ENCODE measurements at regions of chr14 and their contacts with region 1.

Region 1: GRCh38 chr14:64704143-64704742 is at the start of gene PLEKHG3:
- DNase-seq: peak; percentile 82
- ATAC-seq: peak; percentile 62
- H3K4me3 ChIP-seq: peak within 1 kb of the TSS; percentile 93
- H3K27ac ChIP-seq: peak within 1 kb of the TSS; percentile 48
- H3K4me1 ChIP-seq: peaks cover 61% of the 10 kb centered on the region
- H3K27me3 ChIP-seq: no peaks in the 10 kb centered on the region
- CTCF ChIP-seq: no peak
- total RNA-seq, gene PLEKHG3: 49.6 and 64.0 TPM in 2 replicates

Region 2: GRCh38 chr14:63178912-63179311 is 1525.3 kb before region 1 on chr14:
- CTCF ChIA-PET with region 1: no interaction called
- POLR2A ChIA-PET with region 1: no interaction called
- intact Hi-C with region 1: no loop called
- DNase-seq: peak; percentile 78
- ATAC-seq: peak; percentile 79
- H3K4me3 ChIP-seq: no peak overlapping the region
- H3K27ac ChIP-seq: peak overlapping the region; percentile 75
- H3K4me1 ChIP-seq: peaks cover 12% of the 10 kb centered on the region
- H3K27me3 ChIP-seq: 0 out of 2 replicates have a peak, but pooled peaks cover 15% of the 10 kb centered on the region
- CTCF ChIP-seq: no peak

Region 3: GRCh38 chr14:63470962-63471793 is 1233.1 kb before region 1 on chr14:
- CTCF ChIA-PET with region 1: no interaction called
- POLR2A ChIA-PET with region 1: no interaction called
- intact Hi-C with region 1: no loop called
- DNase-seq: peak; percentile 96
- ATAC-seq: peak; percentile 87
- H3K4me3 ChIP-seq: peak overlapping the region; percentile 25; the same call in 1 of the 2 replicates
- H3K27ac ChIP-seq: peak overlapping the region; percentile 89
- H3K4me1 ChIP-seq: peaks cover 55% of the 10 kb centered on the region
- H3K27me3 ChIP-seq: no peaks in the 10 kb centered on the region
- CTCF ChIP-seq: no peak

Region 4: DNA sequence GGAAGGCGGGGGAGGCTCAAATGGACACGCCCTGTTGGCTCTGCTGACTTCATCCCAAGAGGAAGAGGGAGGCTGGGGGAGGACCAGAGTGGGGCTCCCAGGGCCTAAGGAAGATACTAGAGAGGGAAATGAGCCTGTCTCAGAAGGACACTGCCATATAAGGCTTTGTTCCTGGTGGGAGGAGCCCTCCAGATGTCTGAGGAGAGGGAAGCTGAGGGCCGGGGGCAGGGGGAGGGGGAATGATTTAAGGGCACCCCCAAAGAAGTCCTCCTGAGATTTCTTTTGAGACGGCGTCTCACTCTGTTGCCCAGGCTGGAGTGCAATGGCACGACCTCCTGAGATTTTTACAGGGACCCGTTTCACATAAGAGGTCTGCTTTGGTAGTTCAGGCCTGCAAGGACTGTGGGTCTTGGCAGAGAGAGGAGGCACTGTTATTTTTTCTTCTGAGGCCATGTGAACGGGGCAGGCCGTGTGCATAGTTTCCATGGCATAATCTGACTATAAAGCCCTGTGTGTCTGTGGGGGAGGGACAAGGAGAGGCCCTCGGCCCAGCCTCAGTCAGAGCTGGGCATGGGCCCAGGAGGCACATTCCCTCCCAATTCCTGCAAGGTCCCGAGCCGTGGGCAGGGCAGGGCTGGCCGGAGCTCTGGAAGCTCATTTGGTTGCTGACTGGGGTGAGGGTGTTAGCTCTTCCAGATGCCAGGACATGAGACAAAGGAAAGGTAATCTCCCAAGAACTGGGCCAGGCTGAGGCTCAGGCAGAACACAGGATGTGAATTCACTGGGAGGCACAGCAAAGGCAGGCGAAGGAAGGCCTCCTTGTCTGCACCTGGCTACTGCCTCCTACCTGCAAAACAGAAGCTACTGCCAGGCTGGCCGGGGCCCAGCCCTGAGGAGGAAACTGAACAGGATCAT is 22.2 kb before region 1 on chr14:
- CTCF ChIA-PET with region 1: interaction called, 4 read pairs
- POLR2A ChIA-PET with region 1: interaction called, 3 read pairs
- intact Hi-C with region 1: loop called (anchors 2 kb)
- DNase-seq: peak; percentile 72
- ATAC-seq: peak; percentile 83
- H3K4me3 ChIP-seq: no peak overlapping the region
- H3K27ac ChIP-seq: peak overlapping the region; percentile 67
- H3K4me1 ChIP-seq: peaks cover 38% of the 10 kb centered on the region
- H3K27me3 ChIP-seq: no peaks in the 10 kb centered on the region
- CTCF ChIP-seq: peak; percentile 38; the same call in 1 of the 2 replicates

Region 5: GRCh38 chr14:64720131-64720576 is 15.9 kb after region 1 on chr14:
- CTCF ChIA-PET with region 1: interaction called, 6 read pairs
- POLR2A ChIA-PET with region 1: interaction called, 4 read pairs
- intact Hi-C with region 1: loop called (anchors 1 kb)
- DNase-seq: peak; percentile 98
- ATAC-seq: peak; percentile 94
- H3K4me3 ChIP-seq: peak overlapping the region; percentile 16; the same call in 1 of the 2 replicates
- H3K27ac ChIP-seq: peak overlapping the region; percentile 93
- H3K4me1 ChIP-seq: peaks cover 76% of the 10 kb centered on the region
- H3K27me3 ChIP-seq: no peaks in the 10 kb centered on the region
- CTCF ChIP-seq: no peak

Region 6: DNA sequence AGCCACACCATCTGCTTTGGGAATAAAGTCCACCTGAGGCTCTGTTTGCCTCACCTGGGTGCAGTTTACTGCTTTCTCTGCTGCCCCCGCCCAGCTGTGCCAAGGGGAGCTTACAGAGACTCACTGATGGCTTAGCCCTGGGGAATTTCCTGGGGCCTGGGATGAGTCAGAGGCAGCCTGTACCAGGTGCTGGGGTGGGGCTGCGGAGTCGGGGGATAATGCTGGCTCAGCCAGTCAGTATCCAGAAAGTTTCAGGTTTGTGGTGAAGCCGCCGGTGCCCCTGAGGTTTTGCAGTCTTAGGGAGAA is 22.3 kb after region 1 on chr14:
- CTCF ChIA-PET with region 1: interaction called, 6 read pairs
- POLR2A ChIA-PET with region 1: no interaction called
- intact Hi-C with region 1: loop called (anchors 1 kb)
- DNase-seq: peak; percentile 96
- ATAC-seq: peak; percentile 98
- H3K4me3 ChIP-seq: peak overlapping the region; percentile 29; the same call in 1 of the 2 replicates
- H3K27ac ChIP-seq: peak overlapping the region; percentile 84
- H3K4me1 ChIP-seq: peaks cover 46% of the 10 kb centered on the region
- H3K27me3 ChIP-seq: no peaks in the 10 kb centered on the region
- CTCF ChIP-seq: no peak

Region 7: DNA sequence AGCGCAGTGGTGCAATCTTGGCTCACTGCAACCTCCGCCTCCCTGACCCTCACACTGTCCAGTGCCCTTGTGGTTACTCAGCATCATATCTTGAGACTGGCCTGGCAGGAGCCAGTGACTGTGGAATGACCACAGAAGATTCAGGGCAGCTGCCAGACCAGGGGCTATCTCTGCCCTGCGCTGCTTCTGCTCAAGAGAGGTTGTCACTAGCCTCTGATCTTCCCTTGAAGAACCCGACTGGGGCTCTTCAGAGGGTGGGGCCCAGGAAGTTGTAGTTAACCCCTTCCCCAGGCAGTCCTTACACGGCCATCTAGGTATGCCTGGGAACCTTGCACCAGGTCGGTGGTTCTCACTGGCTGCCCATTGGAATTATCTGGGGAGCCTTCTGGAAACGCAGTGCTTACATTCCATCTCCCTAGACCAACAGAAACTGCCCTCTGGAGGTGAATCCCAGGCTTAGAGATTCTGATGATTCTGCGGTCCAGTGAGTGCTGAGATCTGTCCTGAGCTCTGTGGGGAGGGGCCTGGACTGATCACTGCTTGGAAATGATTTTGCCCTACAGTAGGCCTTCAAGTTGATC is 41.4 kb after region 1 on chr14:
- CTCF ChIA-PET with region 1: interaction called, 3 read pairs
- POLR2A ChIA-PET with region 1: interaction called, 12 read pairs
- intact Hi-C with region 1: no loop called
- DNase-seq: no peak
- ATAC-seq: peak; percentile 39
- H3K4me3 ChIP-seq: no peak overlapping the region
- H3K27ac ChIP-seq: no peak overlapping the region
- H3K4me1 ChIP-seq: no peaks in the 10 kb centered on the region
- H3K27me3 ChIP-seq: no peaks in the 10 kb centered on the region
- CTCF ChIP-seq: 0 out of 2 replicates have a peak, but pooled peaks have one; percentile 33

Region 8: GRCh38 chr14:64764641-64765520 is 60.6 kb after region 1 on chr14:
- CTCF ChIA-PET with region 1: interaction called, 4 read pairs
- POLR2A ChIA-PET with region 1: interaction called, 3 read pairs
- intact Hi-C with region 1: loop called (anchors 2 kb)
- DNase-seq: peak; percentile 92
- ATAC-seq: peak; percentile 48
- H3K4me3 ChIP-seq: peak overlapping the region; percentile 31; the same call in 1 of the 2 replicates
- H3K27ac ChIP-seq: no peak overlapping the region
- H3K4me1 ChIP-seq: peaks cover 49% of the 10 kb centered on the region
- H3K27me3 ChIP-seq: no peaks in the 10 kb centered on the region
- CTCF ChIP-seq: peak; percentile 86

Region 9: GRCh38 chr14:64937821-64938193 is 233.6 kb after region 1 on chr14:
- CTCF ChIA-PET with region 1: no interaction called
- POLR2A ChIA-PET with region 1: no interaction called
- intact Hi-C with region 1: no loop called
- DNase-seq: peak; percentile 52
- ATAC-seq: peak; percentile 74
- H3K4me3 ChIP-seq: no peak overlapping the region
- H3K27ac ChIP-seq: no peak overlapping the region
- H3K4me1 ChIP-seq: peaks cover 5% of the 10 kb centered on the region; the same call in 1 of the 2 replicates
- H3K27me3 ChIP-seq: no peaks in the 10 kb centered on the region
- CTCF ChIP-seq: peak; percentile 66